ENCODE measurements at regions of chr10 and their contacts with region 1.

Region 1: GRCh38 chr10:12782537-12782936 is 219.0 kb downstream of the CCDC3 start:
- H3K4me3 ChIP-seq: no peak overlapping the region
- H3K27ac ChIP-seq: no peak overlapping the region
- H3K4me1 ChIP-seq: no peaks in the 10 kb centered on the region
- CTCF ChIP-seq: peak; percentile 40; the same call in 1 of the 2 replicates

Region 2: GRCh38 chr10:12710594-12711349 is 71.8 kb before region 1 on chr10:
- CTCF ChIA-PET with region 1: interaction called, 18 read pairs
- POLR2A ChIA-PET with region 1: no interaction called
- H3K4me3 ChIP-seq: no peak overlapping the region
- H3K27ac ChIP-seq: peak overlapping the region; percentile 50
- H3K4me1 ChIP-seq: peaks cover 22% of the 10 kb centered on the region
- CTCF ChIP-seq: peak; percentile 72

Region 3: DNA sequence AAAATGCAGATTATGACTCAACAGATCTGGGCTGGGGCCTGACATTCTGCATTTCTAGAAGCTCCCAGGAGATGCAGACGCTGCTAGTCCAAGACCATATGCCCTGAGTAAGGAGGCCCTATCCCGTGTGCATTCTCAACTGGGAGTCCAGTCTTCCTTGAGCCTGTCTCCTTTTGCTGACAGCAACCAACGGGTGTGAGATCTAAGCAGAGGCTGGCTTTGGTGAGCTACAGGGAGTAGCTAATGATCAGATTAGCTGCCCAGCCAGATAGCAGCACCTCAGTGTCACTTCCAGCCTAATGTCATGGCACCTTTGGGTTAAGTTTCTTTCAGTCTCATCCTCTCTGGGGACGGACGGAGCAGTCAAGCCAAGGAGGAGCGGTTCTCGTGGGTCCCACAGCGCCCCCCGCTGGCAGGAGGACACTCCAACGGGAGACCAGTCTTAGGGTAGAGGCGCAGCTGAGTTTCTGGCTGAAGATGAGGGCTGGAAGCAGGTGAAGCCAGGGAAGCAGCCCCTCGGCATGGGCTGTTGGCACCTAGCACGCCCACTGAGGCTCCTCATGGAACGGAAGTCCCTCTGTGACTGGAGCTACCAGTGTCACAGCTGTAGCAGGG is 64.9 kb after region 1 on chr10:
- CTCF ChIA-PET with region 1: interaction called, 16 read pairs
- POLR2A ChIA-PET with region 1: no interaction called
- H3K4me3 ChIP-seq: no peak overlapping the region
- H3K27ac ChIP-seq: no peak overlapping the region
- H3K4me1 ChIP-seq: no peaks in the 10 kb centered on the region; the same call in 1 of the 2 replicates
- CTCF ChIP-seq: peak; percentile 19; the same call in 1 of the 2 replicates

Region 4: DNA sequence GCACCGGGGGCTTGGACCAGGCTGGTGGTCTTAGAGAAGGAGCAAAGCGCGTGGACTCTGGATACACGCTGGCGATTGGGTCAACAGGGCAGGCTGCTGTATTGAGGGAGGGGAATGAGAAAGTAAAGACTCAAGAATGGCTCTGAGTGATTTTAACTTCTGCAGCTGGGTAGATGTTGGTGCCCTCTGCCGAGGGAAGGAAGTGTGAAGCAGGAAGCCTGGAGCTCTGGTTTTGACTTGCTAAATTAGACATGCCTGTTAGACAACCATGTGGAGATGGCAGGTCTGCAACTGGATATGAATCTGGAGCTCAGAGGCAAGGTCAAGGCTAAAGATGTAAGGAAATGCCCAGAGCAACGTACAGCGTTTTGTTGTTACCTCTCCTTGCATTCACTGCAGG is 101.8 kb after region 1 on chr10:
- CTCF ChIA-PET with region 1: interaction called, 10 read pairs
- POLR2A ChIA-PET with region 1: no interaction called
- H3K4me3 ChIP-seq: no peak overlapping the region
- H3K27ac ChIP-seq: no peak overlapping the region
- H3K4me1 ChIP-seq: no peaks in the 10 kb centered on the region
- CTCF ChIP-seq: no peak

Region 5: DNA sequence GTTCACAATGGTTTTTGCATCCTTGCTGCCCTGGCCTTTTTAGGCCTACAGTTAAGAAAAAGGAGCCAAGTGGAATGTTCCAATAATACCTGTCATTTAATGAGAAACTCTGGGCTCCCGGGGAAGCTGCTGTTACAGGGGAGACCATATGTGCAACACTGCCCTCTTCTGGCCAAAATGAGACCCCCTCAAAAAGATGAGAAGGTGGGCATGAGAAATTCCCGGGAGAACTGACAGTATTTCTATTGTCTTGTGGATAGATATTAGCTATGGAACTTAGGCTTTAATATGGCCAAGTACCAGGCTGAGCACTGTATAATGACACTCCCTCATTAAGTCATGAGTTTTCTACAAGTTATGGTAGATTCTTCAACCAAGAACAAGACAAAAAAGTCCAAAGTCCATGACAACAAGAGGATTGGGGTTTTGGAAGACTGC is 119.6 kb after region 1 on chr10:
- CTCF ChIA-PET with region 1: interaction called, 39 read pairs
- POLR2A ChIA-PET with region 1: no interaction called
- H3K4me3 ChIP-seq: no peak overlapping the region
- H3K27ac ChIP-seq: no peak overlapping the region
- H3K4me1 ChIP-seq: no peaks in the 10 kb centered on the region
- CTCF ChIP-seq: peak; percentile 39; the same call in 1 of the 2 replicates